CD4-positive, alpha-beta T cell (primary cell): ENCODE measurements at regions of chr5 and their contacts with region 1.

Region 1: DNA sequence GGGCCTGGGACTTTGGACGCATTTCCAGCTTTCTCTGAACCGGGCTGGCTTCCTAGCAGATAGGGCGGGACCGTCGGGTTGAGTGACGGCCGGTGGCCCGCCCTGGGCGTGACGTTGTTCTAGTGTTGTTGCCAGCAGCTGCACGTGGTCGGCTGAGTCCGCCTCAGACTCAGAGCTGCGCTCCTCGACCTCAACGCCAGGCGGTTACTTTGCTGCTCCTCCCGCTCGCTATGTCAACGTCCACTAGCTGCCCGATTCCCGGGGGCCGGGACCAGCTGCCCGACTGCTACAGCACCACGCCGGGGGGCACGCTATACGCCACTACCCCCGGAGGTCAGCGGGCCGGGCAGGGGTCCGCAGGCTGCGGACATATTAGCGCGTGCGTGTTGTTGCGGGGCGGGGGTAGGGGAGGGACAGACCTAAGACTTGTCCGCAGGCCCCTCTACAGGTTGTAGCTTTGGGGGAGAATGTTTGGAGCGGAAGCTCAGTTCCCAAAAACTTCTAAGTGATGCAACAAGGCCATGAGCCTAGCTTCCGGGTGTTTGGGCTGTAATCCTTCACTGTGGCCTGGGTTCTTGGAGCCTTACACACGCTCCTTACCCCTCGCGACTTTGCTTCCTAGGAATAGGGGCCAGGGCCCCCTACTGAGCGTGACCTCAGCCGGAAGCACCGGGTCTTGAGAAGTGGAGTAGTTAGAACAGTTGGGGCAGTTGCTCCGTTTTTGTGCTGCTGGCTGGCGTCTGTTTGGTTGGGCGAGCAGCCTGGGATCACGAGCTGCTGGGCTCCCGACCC is at the start of gene EIF4EBP3:
- DNase-seq: peak; percentile 79 to 95 (median 86)
- ATAC-seq: peak; percentile 97
- H3K4me3 ChIP-seq: peak within 1 kb of the TSS; percentile 79
- H3K4me3 Mint-ChIP-seq: peak within 1 kb of the TSS; percentile 96
- H3K27ac ChIP-seq: peak within 1 kb of the TSS; percentile 88 to 89
- H3K27ac Mint-ChIP-seq: peak within 1 kb of the TSS; percentile 96
- H3K4me1 ChIP-seq: peaks cover 31% of the 10 kb centered on the region
- H3K4me1 Mint-ChIP-seq: peaks cover 38% of the 10 kb centered on the region
- H3K27me3 ChIP-seq: no peaks in the 10 kb centered on the region
- H3K27me3 Mint-ChIP-seq: no peaks in the 10 kb centered on the region
- CTCF ChIP-seq: peak; percentile 72
- total RNA-seq, gene EIF4EBP3: 12.7 to 15.1 TPM

Region 2: DNA sequence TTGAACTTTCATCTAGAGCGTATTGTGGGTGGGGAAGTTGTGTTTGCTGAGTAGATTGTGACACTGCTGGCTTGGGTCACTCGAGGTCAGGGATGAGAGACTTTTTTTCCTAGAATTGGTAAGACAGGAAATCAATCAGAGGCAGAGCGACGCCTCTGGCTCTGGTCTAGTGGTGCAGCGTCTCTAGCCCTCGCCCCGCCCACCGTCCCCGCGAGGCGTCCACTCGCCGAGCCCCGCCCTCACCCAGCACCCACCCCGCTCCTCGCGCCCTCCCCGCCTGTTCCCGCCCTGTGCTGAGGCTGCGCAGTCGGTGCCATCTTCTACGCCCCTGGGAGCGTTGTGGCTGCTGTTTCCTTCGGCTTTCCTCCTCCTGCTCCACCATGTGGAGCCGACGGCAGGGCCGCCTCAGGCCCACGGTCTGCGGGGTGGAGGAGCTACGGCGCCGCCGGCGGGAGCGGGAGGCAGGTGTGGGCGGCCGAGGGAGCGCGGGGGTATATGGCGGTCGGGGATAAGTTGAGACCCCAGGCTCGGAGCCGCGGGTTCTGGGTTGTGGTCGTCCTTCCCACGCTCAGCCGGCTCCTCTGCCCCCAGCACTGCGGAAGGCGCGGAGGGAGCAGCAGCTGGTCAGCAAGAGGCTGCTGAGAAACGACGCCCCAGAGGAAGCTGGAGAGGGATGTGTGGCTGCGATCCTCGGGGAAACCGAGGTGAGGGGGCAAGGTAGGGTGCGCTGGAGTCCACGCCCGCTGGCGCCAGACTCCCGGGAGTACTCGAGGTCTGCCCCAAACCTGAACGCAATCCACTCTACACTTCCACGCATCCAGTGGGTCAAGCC is 91.7 kb after region 1 on chr5 and contains the start of gene TMCO6:
- CTCF ChIA-PET with region 1: interaction called, 22 read pairs
- POLR2A ChIA-PET with region 1: interaction called, 26 read pairs
- intact Hi-C with region 1: loop called (anchors 2 to 5 kb)
- DNase-seq: peak; percentile 94 to 99 (median 96)
- ATAC-seq: peak; percentile 98
- H3K4me3 ChIP-seq: peak within 1 kb of the TSS; percentile 73
- H3K4me3 Mint-ChIP-seq: peak within 1 kb of the TSS; percentile 92
- H3K27ac ChIP-seq: peak within 1 kb of the TSS; percentile 77 to 94
- H3K27ac Mint-ChIP-seq: peak within 1 kb of the TSS; percentile 93
- H3K4me1 ChIP-seq: peaks cover 28% of the 10 kb centered on the region
- H3K4me1 Mint-ChIP-seq: peaks cover 34% of the 10 kb centered on the region
- H3K27me3 ChIP-seq: no peaks in the 10 kb centered on the region
- H3K27me3 Mint-ChIP-seq: no peaks in the 10 kb centered on the region
- CTCF ChIP-seq: peak; percentile 76
- total RNA-seq, gene TMCO6: 20.9 to 21.1 TPM

Region 3: DNA sequence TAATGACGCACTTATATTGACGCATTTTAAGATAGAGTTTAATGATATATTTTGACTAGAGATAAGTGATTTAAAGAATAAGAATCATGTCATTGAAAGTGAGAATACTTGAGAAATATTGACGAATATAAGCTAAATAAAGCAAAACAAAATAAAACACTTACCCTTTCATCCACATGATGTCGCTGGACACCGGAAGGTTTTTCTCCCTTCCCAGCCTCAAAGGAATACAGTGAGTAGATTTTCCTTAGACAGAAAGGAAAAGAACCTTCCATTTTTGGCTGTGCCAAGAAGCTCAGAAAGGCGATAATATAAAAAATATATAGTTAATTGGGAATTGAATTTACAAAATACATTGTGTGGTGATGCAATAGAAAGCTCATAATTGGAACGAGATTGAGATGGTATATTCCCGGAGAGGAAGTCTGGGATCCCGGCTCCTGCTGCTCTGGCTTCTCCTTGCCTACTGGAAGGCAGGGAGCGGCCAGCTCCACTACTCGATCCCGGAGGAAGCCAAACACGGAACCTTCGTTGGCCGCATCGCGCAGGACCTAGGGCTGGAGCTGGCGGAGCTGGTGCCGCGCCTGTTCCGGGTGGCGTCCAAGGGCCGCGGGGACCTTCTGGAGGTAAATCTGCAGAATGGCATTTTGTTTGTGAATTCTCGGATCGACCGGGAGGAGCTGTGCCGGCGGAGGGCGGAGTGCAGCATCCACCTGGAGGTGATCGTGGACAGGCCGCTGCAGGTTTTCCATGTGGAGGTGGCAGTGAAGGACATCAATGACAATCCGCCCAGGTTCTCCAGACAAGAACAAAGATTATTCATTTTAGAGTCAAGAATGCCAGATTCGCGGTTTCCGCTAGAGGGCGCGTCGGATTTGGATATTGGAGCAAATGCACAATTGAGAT is 273.9 kb after region 1 on chr5 and contains the start of gene PCDHA5:
- CTCF ChIA-PET with region 1: no interaction called
- POLR2A ChIA-PET with region 1: no interaction called
- intact Hi-C with region 1: no loop called
- DNase-seq: no peak
- ATAC-seq: no peak
- H3K4me3 ChIP-seq: no peak within 1 kb of the TSS
- H3K4me3 Mint-ChIP-seq: no peak within 1 kb of the TSS
- H3K27ac ChIP-seq: no peak within 1 kb of the TSS
- H3K27ac Mint-ChIP-seq: no peak within 1 kb of the TSS
- H3K4me1 ChIP-seq: no peaks in the 10 kb centered on the region
- H3K4me1 Mint-ChIP-seq: no peaks in the 10 kb centered on the region
- H3K27me3 ChIP-seq: peaks cover 10 to 16% of the 10 kb centered on the region in 2 experiments
- H3K27me3 Mint-ChIP-seq: peaks cover 42% of the 10 kb centered on the region
- CTCF ChIP-seq: no peak
- total RNA-seq, gene PCDHA5: not detected